Head of caudate nucleus (tissue), 42 donors: ENCODE measurements at regions of chr15 and their contacts with region 1.

Region 1: DNA sequence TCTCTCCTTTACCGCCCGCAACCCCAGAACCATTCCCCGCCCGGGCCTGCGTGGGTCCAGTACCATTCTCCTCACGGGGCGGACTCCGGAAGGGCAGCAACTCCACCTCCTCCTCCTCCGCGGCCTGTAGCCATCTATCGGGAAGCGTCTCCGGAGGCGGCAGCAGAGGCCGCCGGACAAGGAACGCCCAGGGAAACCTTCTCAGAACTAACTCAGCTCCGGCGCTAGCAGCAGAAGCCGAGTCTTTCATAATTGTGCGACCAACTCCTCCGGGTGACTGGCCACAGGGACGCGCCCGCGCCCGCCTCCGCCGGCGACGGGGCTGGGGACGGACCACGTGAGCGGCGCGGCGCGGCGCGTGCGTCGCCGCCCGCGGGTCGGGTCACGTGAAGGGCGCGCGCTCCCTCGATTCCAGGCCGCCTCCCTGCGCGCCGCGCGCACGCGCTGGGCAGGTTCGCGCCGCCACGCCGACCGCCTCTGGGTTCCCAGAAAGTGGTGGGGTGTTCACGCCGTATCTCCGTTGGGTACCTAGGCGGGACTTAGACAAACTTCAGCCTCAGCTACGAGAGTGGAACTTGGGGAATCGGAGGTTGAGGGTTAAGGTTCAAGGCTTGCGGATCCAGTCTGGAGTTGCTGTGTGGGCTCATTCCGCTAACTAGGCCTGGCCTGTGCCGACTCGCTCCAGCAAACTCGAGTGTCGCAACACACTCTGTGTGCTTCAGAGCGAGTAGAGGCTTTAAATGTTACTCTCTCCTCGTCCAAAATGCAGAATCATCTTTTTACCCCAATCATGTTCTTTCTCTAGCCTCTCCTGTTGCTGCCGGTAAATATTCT is at the start of gene TRPM7:
- DNase-seq: peak; percentile 62 to 94 (median 88)

Region 2: DNA sequence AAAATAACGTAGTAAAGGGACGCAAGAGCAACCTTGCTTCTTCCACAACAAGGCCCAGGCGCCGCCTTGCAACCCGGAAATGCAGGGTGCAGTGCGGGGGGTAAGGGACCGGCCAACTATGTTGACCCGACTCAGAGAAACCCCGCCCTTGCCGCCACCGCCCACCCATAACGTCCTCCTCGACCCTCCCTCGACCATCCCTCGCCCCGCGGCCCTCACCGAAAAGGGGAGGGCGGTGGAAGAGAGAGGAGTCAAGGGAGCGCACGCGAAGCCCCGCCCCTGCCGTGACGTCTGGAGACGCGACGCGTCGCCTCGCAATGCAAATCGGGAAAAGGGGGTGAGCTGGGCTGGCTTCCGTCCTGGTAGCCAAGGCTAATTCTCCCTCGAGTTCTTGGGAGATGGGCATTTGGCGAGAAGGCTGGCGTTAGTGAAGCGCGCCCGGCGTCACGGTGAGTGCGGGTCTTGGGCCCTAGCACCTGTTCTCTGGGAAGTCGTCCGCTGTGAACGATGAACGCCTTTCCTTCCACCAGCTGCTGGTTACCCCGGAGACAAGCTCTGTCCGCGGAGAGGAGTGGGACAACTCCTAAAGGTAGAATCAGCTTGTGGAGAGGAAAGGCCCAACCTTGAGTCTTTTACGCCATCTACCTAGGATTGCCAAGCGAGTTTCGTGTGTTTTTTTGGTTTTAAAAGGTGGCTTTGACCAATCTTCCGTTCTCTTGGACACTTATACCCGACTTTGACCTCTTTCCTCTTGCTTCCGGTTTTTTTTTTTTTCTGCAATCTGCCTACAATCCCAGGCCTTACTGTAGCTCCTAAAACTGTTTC is 262.4 kb before region 1 on chr15 and contains the start of gene USP8:
- intact Hi-C with region 1: loop called (anchors 5 kb)
- DNase-seq: peak; percentile 94 to 98 (median 96)

Region 3: GRCh38 chr15:50908210-50909009 is 221.7 kb after region 1 on chr15 and contains the start of gene AP4E1:
- intact Hi-C with region 1: loop called (anchors 1 kb)
- DNase-seq: peak; percentile 75 to 97 (median 92)